Activated CD4-positive, alpha-beta memory T cell treated with anti-CD3 and anti-CD28 coated beads for 36 hours (primary cell): ENCODE measurements at regions of chr10 and their contacts with region 1.

Region 1: GRCh38 chr10:116444527-116445142 is 17.0 kb downstream of the PNLIPRP3 start:
- DNase-seq: no peak
- H3K4me3 Mint-ChIP-seq: no peak overlapping the region
- H3K27ac Mint-ChIP-seq: no peak overlapping the region
- H3K4me1 Mint-ChIP-seq: no peaks in the 10 kb centered on the region
- H3K27me3 Mint-ChIP-seq: no peaks in the 10 kb centered on the region

Region 2: DNA sequence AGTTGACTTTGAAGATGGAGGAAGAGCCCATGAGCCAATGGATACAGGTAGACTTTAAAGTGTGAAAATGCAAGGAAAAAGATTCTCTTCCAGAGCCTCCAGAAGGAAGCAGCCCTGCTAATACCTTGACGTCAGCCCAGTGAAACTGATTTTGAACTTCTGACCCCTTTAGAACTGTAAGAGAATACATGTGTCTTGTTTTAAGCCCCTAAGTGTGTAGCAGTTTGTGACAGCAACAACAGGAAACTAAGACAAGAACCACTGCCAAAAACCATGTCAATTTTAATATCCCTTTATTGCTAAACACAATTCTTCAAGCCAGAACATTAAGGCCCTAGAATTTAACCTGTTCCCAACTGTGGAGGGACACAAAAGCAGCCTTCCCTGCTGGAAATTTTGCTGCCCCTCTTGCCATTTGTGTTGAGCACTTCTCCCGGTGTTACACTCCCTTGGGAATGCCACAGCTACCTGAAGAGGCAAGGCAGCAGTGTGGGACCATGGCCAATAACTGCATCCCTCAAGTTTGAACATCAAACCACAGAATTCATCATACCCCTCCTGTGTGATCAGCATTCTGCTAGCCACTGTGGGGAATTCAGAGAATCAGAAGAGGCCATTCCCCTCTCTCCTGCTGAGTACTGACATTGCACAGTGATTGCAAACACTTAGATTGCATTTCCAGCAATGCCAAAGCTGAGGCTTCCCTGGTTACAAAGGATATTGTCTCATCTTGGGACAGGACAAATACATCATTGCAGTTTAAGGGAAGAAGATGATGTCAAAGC is 132.7 kb before region 1 on chr10:
- CTCF ChIA-PET with region 1: no interaction called
- POLR2A ChIA-PET with region 1: no interaction called
- intact Hi-C with region 1: no loop called
- DNase-seq: no peak
- H3K4me3 Mint-ChIP-seq: no peak overlapping the region
- H3K27ac Mint-ChIP-seq: no peak overlapping the region
- H3K4me1 Mint-ChIP-seq: no peaks in the 10 kb centered on the region
- H3K27me3 Mint-ChIP-seq: no peaks in the 10 kb centered on the region

Region 3: GRCh38 chr10:116521404-116522290 is 77.0 kb after region 1 on chr10:
- CTCF ChIA-PET with region 1: interaction called, 3 read pairs
- POLR2A ChIA-PET with region 1: no interaction called
- intact Hi-C with region 1: loop called (anchors 1 kb)
- DNase-seq: peak; percentile 16
- H3K4me3 Mint-ChIP-seq: no peak overlapping the region
- H3K27ac Mint-ChIP-seq: no peak overlapping the region
- H3K4me1 Mint-ChIP-seq: no peaks in the 10 kb centered on the region
- H3K27me3 Mint-ChIP-seq: peaks cover 2% of the 10 kb centered on the region

Region 4: DNA sequence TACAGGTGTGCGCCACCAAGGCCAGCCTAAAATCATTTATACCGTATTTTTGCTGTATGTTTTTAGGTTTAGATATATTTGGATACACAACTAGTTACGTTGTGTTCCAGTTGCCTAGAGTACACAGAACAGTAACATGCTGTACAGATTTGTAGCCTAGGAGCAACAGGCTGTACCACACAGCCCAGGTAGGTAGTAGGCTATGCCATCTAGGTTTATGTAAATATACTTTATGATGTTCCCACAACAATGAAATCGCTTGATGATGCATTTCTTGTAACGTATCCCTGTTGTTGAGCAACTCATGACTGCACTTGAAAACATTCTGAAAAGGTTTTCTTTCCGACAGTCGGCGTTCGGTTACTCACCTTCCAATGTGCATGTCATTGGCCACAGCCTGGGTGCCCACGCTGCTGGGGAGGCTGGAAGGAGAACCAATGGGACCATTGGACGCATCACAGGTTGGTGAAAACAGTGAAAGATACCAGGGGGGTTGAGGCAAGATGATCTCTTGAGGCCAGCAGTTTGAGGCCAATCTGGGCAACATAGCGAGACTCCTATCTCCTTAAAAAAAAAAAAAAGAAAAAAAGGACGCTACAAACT is 108.8 kb after region 1 on chr10:
- CTCF ChIA-PET with region 1: no interaction called
- POLR2A ChIA-PET with region 1: no interaction called
- intact Hi-C with region 1: no loop called
- DNase-seq: no peak
- H3K4me3 Mint-ChIP-seq: no peak overlapping the region
- H3K27ac Mint-ChIP-seq: no peak overlapping the region
- H3K4me1 Mint-ChIP-seq: no peaks in the 10 kb centered on the region
- H3K27me3 Mint-ChIP-seq: no peaks in the 10 kb centered on the region

Region 5: DNA sequence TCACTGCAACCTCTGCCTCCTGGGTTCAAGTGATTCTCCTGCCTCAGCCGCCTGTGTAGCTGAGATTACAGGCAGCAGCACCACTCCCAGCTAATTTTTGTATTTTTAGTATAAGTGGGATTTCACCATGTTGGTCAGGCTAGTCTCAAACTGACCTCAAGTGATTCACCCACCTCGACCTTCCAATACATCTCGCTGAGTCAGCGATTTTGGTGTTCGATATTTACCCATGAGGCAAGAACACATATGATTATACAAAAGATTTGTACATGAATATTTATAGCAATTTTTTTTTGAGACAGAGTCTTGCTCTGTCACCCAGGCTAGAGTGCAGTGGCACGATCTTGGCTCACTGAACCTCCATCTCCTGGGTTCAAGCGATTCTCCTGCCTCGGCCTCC is 120.9 kb after region 1 on chr10:
- CTCF ChIA-PET with region 1: no interaction called
- POLR2A ChIA-PET with region 1: no interaction called
- intact Hi-C with region 1: no loop called
- DNase-seq: no peak
- H3K4me3 Mint-ChIP-seq: no peak overlapping the region
- H3K27ac Mint-ChIP-seq: no peak overlapping the region
- H3K4me1 Mint-ChIP-seq: no peaks in the 10 kb centered on the region
- H3K27me3 Mint-ChIP-seq: no peaks in the 10 kb centered on the region